ENCODE measurements at regions of chr18 and their contacts with region 1.

Region 1: DNA sequence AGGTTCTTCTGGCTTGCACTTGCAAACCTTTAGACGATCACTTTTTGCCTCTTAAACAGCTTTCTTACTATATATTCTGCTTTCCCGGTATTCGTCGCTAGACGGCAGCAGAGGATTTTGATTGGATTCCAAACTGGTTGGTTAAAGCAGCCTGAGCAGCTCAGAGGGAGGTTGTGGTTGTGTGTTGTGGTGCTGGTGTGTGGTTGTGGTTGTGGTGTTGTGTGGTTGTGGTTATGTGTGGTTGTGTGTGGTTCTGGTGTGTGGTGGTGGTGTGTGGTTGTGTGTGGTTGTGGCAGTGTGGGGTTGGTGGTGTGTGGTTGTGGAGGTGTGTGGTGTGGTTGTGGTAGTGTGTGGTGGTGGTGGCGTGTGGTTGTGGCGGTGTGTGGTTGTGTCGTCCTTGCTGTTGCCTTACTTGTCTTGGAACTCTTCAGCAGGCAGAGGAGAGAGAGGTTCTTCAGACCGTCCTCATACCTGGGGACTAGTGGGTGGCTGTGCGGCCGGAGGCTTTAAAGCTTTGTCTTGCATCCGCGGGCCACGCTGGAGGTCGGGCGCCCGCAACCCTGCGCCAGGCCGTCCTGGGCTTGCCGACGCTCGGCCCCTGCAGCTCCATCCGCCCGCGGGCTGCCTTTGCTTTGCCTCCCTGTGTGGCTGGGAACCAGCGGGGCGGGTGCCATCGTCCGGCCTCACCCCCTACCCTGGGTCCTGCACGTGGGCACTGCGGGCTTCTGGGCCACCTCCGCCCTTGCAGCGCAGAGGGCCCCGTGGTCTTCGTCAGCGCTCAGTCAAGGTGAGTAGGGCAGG is 190.8 kb downstream of the ARHGAP28 start:
- DNase-seq: no peak
- ATAC-seq: peak; percentile 68
- H3K4me3 ChIP-seq: no peak overlapping the region
- H3K27ac ChIP-seq: no peak overlapping the region
- H3K4me1 ChIP-seq: no peaks in the 10 kb centered on the region
- H3K27me3 ChIP-seq: no peaks in the 10 kb centered on the region
- CTCF ChIP-seq: peak; percentile 62 to 75 (median 68); a peak in 5 of 6 replicates
- EP300 ChIP-seq: no peak; a peak in 1 of 4 replicates
- POLR2A ChIP-seq: no peak
- RAD21 ChIP-seq: peak; percentile 76

Region 2: GRCh38 chr18:6881034-6881820 is 39.1 kb before region 1 on chr18:
- CTCF ChIA-PET with region 1: no interaction called
- POLR2A ChIA-PET with region 1: no interaction called
- RAD21 ChIA-PET with region 1: no interaction called
- SMC1A ChIA-PET with region 1: no interaction called
- in situ Hi-C with region 1: no loop called
- intact Hi-C with region 1: no loop called
- DNase-seq: no peak
- ATAC-seq: no peak
- H3K4me3 ChIP-seq: no peak overlapping the region
- H3K27ac ChIP-seq: no peak overlapping the region
- H3K4me1 ChIP-seq: no peaks in the 10 kb centered on the region
- H3K27me3 ChIP-seq: no peaks in the 10 kb centered on the region
- CTCF ChIP-seq: no peak
- EP300 ChIP-seq: no peak
- POLR2A ChIP-seq: no peak
- RAD21 ChIP-seq: no peak

Region 3: DNA sequence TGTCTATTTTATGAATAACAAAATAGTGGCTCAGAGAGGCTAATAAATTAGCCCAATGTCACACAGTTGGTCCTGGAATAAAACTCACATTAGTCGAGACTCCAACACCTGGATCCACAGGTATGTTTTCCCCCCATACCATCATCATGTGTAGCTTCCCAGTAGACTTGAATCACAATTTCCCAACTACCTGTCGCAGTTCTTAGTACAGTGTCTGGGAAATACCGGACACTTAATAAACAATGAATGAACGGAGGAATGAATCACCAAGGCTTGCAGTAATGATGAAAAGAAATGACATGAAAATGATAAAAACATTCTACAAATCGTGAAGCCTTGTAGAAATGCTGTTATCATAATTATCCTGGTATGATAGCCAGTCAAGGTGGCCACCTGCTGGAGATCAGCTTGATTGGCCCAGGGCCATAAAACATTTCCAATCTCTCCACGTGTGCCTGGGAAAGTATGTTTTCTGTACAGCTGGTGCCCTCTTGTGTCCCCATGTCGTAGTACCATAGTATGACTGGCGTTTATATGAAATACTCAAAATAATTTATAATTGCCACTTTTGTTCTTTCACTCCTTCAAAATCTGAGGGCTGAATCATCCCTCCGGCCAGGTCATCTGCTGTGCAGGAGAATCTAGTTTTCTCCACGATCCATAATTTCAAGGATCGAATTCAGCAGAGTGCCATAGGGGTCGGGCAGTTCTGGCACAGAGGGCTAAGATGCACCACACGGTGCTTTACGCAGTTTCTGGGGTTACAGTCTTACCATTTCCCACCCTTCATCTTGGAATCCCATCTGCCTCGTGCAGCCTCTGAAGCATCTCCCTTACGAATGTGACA is 101.9 kb after region 1 on chr18:
- CTCF ChIA-PET with region 1: no interaction called
- POLR2A ChIA-PET with region 1: no interaction called
- RAD21 ChIA-PET with region 1: no interaction called
- SMC1A ChIA-PET with region 1: no interaction called
- in situ Hi-C with region 1: no loop called
- intact Hi-C with region 1: loop called (anchors 5 kb)
- DNase-seq: no peak
- ATAC-seq: peak; percentile 48
- H3K4me3 ChIP-seq: no peak overlapping the region
- H3K27ac ChIP-seq: no peak overlapping the region
- H3K4me1 ChIP-seq: no peaks in the 10 kb centered on the region
- H3K27me3 ChIP-seq: no peaks in the 10 kb centered on the region; a peak in 1 of 4 replicates
- CTCF ChIP-seq: peak in 1 of 3 experiments; percentile 2; a peak in 1 of 6 replicates
- EP300 ChIP-seq: no peak
- POLR2A ChIP-seq: no peak
- RAD21 ChIP-seq: no peak

Region 4: GRCh38 chr18:7177116-7177744 is 256.9 kb after region 1 on chr18:
- CTCF ChIA-PET with region 1: interaction called, 47 read pairs
- POLR2A ChIA-PET with region 1: no interaction called
- RAD21 ChIA-PET with region 1: interaction called, 12 read pairs
- SMC1A ChIA-PET with region 1: interaction called, 8 read pairs
- in situ Hi-C with region 1: no loop called
- intact Hi-C with region 1: loop called (anchors 1 kb)
- DNase-seq: no peak
- ATAC-seq: peak; percentile 78
- H3K4me3 ChIP-seq: no peak overlapping the region
- H3K27ac ChIP-seq: no peak overlapping the region
- H3K4me1 ChIP-seq: no peaks in the 10 kb centered on the region
- H3K27me3 ChIP-seq: no peaks in the 10 kb centered on the region
- CTCF ChIP-seq: peak; percentile 18 to 63 (median 39); a peak in 3 of 6 replicates
- EP300 ChIP-seq: no peak
- POLR2A ChIP-seq: no peak
- RAD21 ChIP-seq: 0 out of 2 replicates have a peak, but pooled peaks have one; percentile 7

Measured in GM12878 (cell line).